BJ (cell line): ENCODE measurements at regions of chr11 and their contacts with region 1.

Region 1: GRCh38 chr11:13238879-13239514 is 38.6 kb upstream of the BMAL1 start:
- DNase-seq: no peak
- H3K4me3 ChIP-seq: no peak overlapping the region
- H3K27me3 ChIP-seq: no peaks in the 10 kb centered on the region
- CTCF ChIP-seq: peak; percentile 92

Region 2: GRCh38 chr11:13210424-13210823 is 28.6 kb before region 1 on chr11:
- CTCF ChIA-PET with region 1: interaction called, 48 read pairs
- POLR2A ChIA-PET with region 1: no interaction called
- DNase-seq: peak; percentile 26
- H3K4me3 ChIP-seq: no peak overlapping the region
- H3K27me3 ChIP-seq: no peaks in the 10 kb centered on the region
- CTCF ChIP-seq: peak; percentile 55

Region 3: DNA sequence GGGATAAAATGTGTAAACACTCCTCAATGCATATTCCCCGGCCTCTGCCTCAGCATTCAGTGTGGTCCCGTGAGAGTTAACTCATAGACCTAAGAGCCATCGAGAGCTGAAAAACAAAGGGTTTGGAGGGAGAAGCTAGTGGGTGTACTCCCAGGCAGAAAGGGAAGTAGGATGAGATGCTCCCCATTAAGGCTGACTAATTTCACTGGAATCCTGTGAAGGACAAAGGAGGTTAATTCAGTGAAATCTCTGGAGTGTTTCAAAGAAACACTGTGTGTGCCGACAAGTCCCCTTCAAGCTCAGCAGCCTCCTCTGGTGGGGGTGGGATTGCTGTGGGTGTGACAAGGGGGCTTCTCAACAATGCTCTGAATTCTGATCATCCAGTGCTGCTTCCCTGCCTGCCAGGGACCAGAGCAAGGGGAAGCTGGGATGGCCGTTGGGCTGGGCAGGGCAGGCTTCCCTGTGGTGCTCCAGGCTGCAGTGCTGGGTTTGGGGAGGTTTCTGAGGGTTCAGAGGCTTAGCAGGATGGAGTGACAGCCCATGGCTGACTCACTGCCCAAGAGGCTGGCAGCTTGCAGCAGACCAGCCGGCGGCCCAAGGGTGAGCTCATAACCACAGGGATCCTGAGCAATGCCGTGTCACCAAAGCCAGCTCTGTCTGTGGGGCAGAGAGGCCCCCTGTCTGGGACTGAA is 22.8 kb before region 1 on chr11:
- CTCF ChIA-PET with region 1: interaction called, 48 read pairs
- POLR2A ChIA-PET with region 1: no interaction called
- DNase-seq: peak; percentile 80
- H3K4me3 ChIP-seq: no peak overlapping the region
- H3K27me3 ChIP-seq: no peaks in the 10 kb centered on the region
- CTCF ChIP-seq: 0 out of 2 replicates have a peak, but pooled peaks have one; percentile 8

Region 4: GRCh38 chr11:13222285-13222684 is 16.7 kb before region 1 on chr11:
- CTCF ChIA-PET with region 1: interaction called, 22 read pairs
- POLR2A ChIA-PET with region 1: no interaction called
- DNase-seq: no peak
- H3K4me3 ChIP-seq: no peak overlapping the region
- H3K27me3 ChIP-seq: no peaks in the 10 kb centered on the region
- CTCF ChIP-seq: no peak

Region 5: GRCh38 chr11:13249996-13250395 is 11.0 kb after region 1 on chr11:
- CTCF ChIA-PET with region 1: interaction called, 44 read pairs
- POLR2A ChIA-PET with region 1: no interaction called
- DNase-seq: no peak
- H3K4me3 ChIP-seq: no peak overlapping the region
- H3K27me3 ChIP-seq: peaks cover 2% of the 10 kb centered on the region; the same call in 1 of the 2 replicates
- CTCF ChIP-seq: peak; percentile 34; the same call in 1 of the 2 replicates

Region 6: GRCh38 chr11:13256216-13256615 is 17.2 kb after region 1 on chr11:
- CTCF ChIA-PET with region 1: interaction called, 44 read pairs
- POLR2A ChIA-PET with region 1: no interaction called
- DNase-seq: no peak
- H3K4me3 ChIP-seq: no peak overlapping the region
- H3K27me3 ChIP-seq: no peaks in the 10 kb centered on the region
- CTCF ChIP-seq: no peak

Region 7: DNA sequence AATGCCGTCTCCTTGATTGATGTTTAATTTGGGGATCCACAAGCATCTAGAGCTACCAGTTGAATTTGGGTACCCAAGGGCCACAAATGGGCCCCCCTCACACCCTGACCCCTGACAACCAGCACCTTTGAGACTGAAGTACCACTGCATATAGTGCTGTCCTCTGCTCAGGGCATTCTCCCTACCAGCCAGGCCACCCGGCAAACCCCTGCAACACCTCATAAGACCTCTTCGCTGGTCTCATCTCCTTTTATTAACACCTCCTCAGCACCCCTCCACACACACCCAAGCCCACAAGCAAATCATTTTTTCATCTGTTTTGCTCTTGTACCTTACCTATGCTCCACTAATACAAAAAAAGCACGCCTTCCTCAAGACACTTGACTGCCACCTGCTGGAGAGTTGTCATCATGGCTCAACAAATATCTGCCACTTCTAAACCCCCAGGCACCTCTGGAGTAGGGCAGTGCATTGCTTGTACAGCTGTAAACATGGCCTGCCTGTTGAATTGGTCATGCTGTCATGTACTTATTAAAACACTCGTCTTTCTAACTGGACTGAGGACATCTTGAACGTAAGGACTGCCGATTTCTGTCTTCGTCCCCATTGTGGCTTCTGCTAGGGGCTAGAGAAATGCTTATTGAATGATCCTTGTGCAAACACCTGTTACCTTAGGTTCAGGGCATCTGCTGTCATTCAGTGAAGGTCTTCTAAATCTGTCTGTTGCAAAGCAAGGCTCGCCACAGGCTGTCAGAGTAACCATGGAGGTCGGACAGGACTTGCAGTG is 105.1 kb after region 1 on chr11:
- CTCF ChIA-PET with region 1: interaction called, 18 read pairs
- POLR2A ChIA-PET with region 1: no interaction called
- DNase-seq: no peak
- H3K4me3 ChIP-seq: no peak overlapping the region
- H3K27me3 ChIP-seq: no peaks in the 10 kb centered on the region
- CTCF ChIP-seq: peak; percentile 79